ENCODE measurements at regions of chr11 and their contacts with region 1.

Region 1: GRCh38 chr11:77547863-77548551 is 41.7 kb upstream of the AQP11 start:
- DNase-seq: peak; percentile 77
- H3K4me3 Mint-ChIP-seq: no peak overlapping the region
- H3K27ac Mint-ChIP-seq: no peak overlapping the region
- H3K4me1 Mint-ChIP-seq: peaks cover 5% of the 10 kb centered on the region
- H3K27me3 Mint-ChIP-seq: no peaks in the 10 kb centered on the region
- CTCF ChIP-seq: peak; percentile 72

Region 2: GRCh38 chr11:77047007-77047927 is 500.7 kb before region 1 on chr11:
- CTCF ChIA-PET with region 1: no interaction called
- POLR2A ChIA-PET with region 1: no interaction called
- intact Hi-C with region 1: loop called (anchors 2 kb)
- DNase-seq: peak; percentile 93
- H3K4me3 Mint-ChIP-seq: peak overlapping the region; percentile 68
- H3K27ac Mint-ChIP-seq: no peak overlapping the region
- H3K4me1 Mint-ChIP-seq: peaks cover 12% of the 10 kb centered on the region
- H3K27me3 Mint-ChIP-seq: no peaks in the 10 kb centered on the region
- CTCF ChIP-seq: peak; percentile 63

Region 3: GRCh38 chr11:77187776-77188632 is 360.0 kb before region 1 on chr11:
- CTCF ChIA-PET with region 1: interaction called, 60 read pairs
- POLR2A ChIA-PET with region 1: no interaction called
- intact Hi-C with region 1: no loop called
- DNase-seq: peak; percentile 83
- H3K4me3 Mint-ChIP-seq: no peak overlapping the region
- H3K27ac Mint-ChIP-seq: no peak overlapping the region
- H3K4me1 Mint-ChIP-seq: no peaks in the 10 kb centered on the region
- H3K27me3 Mint-ChIP-seq: peaks cover 12% of the 10 kb centered on the region
- CTCF ChIP-seq: peak; percentile 79

Region 4: GRCh38 chr11:77351281-77351906 is 196.6 kb before region 1 on chr11:
- CTCF ChIA-PET with region 1: no interaction called
- POLR2A ChIA-PET with region 1: no interaction called
- intact Hi-C with region 1: no loop called
- DNase-seq: peak; percentile 23
- H3K4me3 Mint-ChIP-seq: no peak overlapping the region
- H3K27ac Mint-ChIP-seq: peak overlapping the region; percentile 82
- H3K4me1 Mint-ChIP-seq: peaks cover 14% of the 10 kb centered on the region
- H3K27me3 Mint-ChIP-seq: no peaks in the 10 kb centered on the region
- CTCF ChIP-seq: no peak

Region 5: DNA sequence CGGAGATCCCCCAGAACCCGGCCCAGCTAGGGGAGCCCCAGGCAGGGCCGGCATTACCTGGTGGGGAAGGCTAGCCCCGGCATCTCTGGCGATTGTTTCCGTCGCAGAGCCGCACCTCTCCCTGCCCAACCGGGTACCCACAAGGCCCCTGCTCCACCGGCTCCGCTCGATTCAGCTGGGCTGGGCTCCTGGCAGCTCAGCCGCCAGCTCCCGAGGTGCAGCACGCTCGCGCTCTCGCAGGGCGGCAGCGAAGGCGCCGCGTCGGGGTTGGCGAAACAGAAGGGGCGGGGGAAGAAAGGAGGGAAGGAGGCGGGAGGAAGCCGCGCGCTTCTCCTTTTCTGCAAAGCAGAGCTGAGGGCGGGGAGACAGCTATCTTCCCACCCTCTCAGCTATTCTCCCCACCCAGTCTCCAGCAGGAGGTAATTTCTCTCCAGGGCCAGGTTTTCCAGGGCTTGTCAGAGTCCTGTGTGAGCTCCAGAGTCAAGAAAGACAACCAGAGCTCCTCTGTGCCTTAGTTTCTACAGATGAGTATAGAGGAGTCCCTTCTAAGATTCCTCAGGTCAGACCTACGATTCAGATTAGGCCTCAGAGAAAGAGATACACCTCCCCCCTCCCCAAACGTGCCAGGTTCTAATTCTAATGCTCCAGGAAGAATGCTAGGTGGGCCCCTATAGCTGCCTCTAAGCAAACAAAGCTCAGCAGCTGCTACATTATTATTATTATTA is 136.1 kb before region 1 on chr11:
- CTCF ChIA-PET with region 1: interaction called, 7 read pairs
- POLR2A ChIA-PET with region 1: no interaction called
- intact Hi-C with region 1: loop called (anchors 5 kb)
- DNase-seq: peak; percentile 90
- H3K4me3 Mint-ChIP-seq: peak overlapping the region; percentile 90
- H3K27ac Mint-ChIP-seq: peak overlapping the region; percentile 87
- H3K4me1 Mint-ChIP-seq: peaks cover 37% of the 10 kb centered on the region
- H3K27me3 Mint-ChIP-seq: no peaks in the 10 kb centered on the region
- CTCF ChIP-seq: no peak

Region 6: GRCh38 chr11:77473801-77474683 is 74.0 kb before region 1 on chr11 and contains the start of gene PAK1:
- CTCF ChIA-PET with region 1: interaction called, 7 read pairs
- POLR2A ChIA-PET with region 1: no interaction called
- intact Hi-C with region 1: loop called (anchors 1 kb)
- DNase-seq: peak; percentile 83
- H3K4me3 Mint-ChIP-seq: peak within 1 kb of the TSS; percentile 79
- H3K27ac Mint-ChIP-seq: peak within 1 kb of the TSS; percentile 74
- H3K4me1 Mint-ChIP-seq: no peaks in the 10 kb centered on the region
- H3K27me3 Mint-ChIP-seq: no peaks in the 10 kb centered on the region
- CTCF ChIP-seq: no peak
- total RNA-seq, gene PAK1: 24.0 and 25.5 TPM in 2 replicates

Region 7: GRCh38 chr11:77524354-77524938 is 23.6 kb before region 1 on chr11:
- CTCF ChIA-PET with region 1: interaction called, 10 read pairs
- POLR2A ChIA-PET with region 1: no interaction called
- intact Hi-C with region 1: no loop called
- DNase-seq: no peak
- H3K4me3 Mint-ChIP-seq: no peak overlapping the region
- H3K27ac Mint-ChIP-seq: no peak overlapping the region
- H3K4me1 Mint-ChIP-seq: no peaks in the 10 kb centered on the region
- H3K27me3 Mint-ChIP-seq: no peaks in the 10 kb centered on the region
- CTCF ChIP-seq: no peak

Region 8: DNA sequence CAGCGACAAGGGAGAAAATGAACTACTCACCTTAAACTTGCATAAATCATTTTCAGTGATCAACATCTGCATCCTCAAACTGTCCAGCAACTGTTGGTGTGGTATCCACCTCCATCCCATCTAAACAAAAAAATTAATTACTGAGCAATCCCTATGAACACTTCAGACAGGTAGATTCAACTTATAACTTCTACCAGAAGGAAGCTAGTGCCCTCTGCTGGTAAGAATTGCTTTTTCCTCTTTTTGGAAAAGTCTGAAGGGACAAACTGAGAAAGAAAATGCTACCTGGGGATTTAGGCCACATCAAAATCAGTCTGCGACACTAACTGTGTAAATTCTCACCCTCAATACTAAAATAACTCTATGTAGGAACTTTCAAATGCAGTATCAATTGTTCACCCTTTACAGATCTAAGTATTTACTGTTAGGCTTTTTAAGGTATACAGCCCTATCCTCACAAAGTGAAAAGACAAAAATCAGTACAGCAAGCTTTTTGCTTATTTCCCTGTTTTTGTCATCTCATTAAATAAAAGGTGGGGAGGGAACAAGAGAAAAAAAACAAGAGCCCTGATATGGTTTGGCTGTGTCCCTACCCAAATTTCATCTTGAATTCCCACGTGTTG is 71.7 kb after region 1 on chr11:
- CTCF ChIA-PET with region 1: interaction called, 11 read pairs
- POLR2A ChIA-PET with region 1: no interaction called
- intact Hi-C with region 1: no loop called
- DNase-seq: peak; percentile 58
- H3K4me3 Mint-ChIP-seq: no peak overlapping the region
- H3K27ac Mint-ChIP-seq: no peak overlapping the region
- H3K4me1 Mint-ChIP-seq: no peaks in the 10 kb centered on the region
- H3K27me3 Mint-ChIP-seq: no peaks in the 10 kb centered on the region
- CTCF ChIP-seq: peak; percentile 62

Measured in MCF 10A (cell line).